CD4-positive, alpha-beta memory T cell (primary cell): ENCODE measurements at regions of chr2 and their contacts with region 1.

Region 1: DNA sequence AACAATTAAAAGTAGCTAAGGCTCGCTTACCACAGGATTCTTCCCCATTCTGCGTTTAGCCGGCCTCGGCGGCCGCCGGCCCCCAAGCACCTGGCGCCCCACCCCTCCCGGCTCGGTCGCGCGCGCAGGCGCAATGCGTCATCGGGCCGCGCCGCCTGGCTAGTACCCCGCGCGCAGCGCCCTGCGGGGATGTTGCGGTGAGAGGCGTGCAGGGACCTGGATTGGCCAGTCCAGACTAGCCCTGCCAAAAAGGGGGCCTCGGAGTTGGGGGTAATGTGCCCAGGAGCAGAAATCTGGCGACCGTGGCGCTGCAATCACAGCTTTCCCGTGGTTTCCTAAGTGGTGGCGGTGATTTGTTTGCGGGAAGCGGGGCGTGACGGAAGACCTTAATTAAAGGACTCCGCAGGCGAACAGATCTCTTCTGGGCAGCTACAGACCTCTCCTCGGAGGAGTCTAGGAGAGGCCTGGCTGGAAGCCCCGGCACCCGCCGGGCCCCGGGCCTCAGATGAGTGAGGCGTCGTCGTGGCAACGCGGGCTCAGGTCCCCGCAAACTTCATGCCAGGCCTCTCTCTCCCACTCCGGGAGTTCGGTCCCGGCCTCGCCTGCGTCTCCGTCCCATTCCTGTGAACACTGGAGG is 606 bp downstream of the TMEM237 start:
- DNase-seq: peak; percentile 83 to 91 (median 89)
- H3K4me3 ChIP-seq: peak overlapping the region; percentile 92 to 97
- H3K4me3 Mint-ChIP-seq: peak overlapping the region; percentile 89 to 99 (median 96)
- H3K27ac ChIP-seq: peak overlapping the region; percentile 83
- H3K27ac Mint-ChIP-seq: peak overlapping the region; percentile 95 to 100 (median 96)
- H3K4me1 ChIP-seq: no peaks in the 10 kb centered on the region
- H3K4me1 Mint-ChIP-seq: peaks cover 7 to 23% (median 7%) of the 10 kb centered on the region in 4 donors
- H3K27me3 ChIP-seq: no peaks in the 10 kb centered on the region
- H3K27me3 Mint-ChIP-seq: no peaks in the 10 kb centered on the region

Region 2: DNA sequence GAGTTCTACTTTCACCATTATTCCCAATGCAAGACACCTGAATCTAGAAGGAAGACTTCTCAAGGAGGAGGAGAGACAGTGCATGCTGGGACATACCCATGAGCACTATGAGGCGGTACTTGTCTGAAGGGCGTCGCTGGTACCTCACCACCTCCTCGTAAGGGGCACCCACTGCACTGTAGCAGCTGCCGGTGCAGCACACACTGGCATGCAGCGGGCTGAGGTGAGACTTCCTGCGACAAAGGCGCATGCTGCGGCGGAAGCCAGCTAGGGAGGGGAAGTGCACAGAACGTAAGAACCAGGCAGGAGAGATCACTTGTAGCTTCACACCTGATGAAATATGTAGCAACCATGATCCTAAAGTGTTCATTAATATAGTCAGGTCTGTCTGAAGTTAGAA is 13.4 kb after region 1 on chr2:
- CTCF ChIA-PET with region 1: no interaction called
- POLR2A ChIA-PET with region 1: interaction called, 15 read pairs
- intact Hi-C with region 1: no loop called
- DNase-seq: peak in 1 of 5 donors; percentile 7
- H3K4me3 ChIP-seq: no peak overlapping the region
- H3K4me3 Mint-ChIP-seq: no peak overlapping the region
- H3K27ac ChIP-seq: no peak overlapping the region
- H3K27ac Mint-ChIP-seq: no peak overlapping the region
- H3K4me1 ChIP-seq: no peaks in the 10 kb centered on the region
- H3K4me1 Mint-ChIP-seq: peaks cover 0 to 2% (median 0%) of the 10 kb centered on the region in 4 donors
- H3K27me3 ChIP-seq: no peaks in the 10 kb centered on the region
- H3K27me3 Mint-ChIP-seq: peaks cover 14 to 15% of the 10 kb centered on the region in 2 donors

Region 3: GRCh38 chr2:202375609-202376408 is 733.1 kb after region 1 on chr2 and contains the start of gene BMPR2:
- CTCF ChIA-PET with region 1: no interaction called
- POLR2A ChIA-PET with region 1: no interaction called
- intact Hi-C with region 1: loop called (anchors 5 kb)
- DNase-seq: peak; percentile 73 to 88 (median 81)
- H3K4me3 ChIP-seq: peak within 1 kb of the TSS; percentile 91 to 98
- H3K4me3 Mint-ChIP-seq: peak within 1 kb of the TSS; percentile 96 to 99 (median 99)
- H3K27ac ChIP-seq: peak within 1 kb of the TSS; percentile 76
- H3K27ac Mint-ChIP-seq: peak within 1 kb of the TSS; percentile 91 to 98 (median 95)
- H3K4me1 ChIP-seq: peaks cover 30% of the 10 kb centered on the region
- H3K4me1 Mint-ChIP-seq: peaks cover 21 to 43% (median 23%) of the 10 kb centered on the region in 4 donors
- H3K27me3 ChIP-seq: no peaks in the 10 kb centered on the region
- H3K27me3 Mint-ChIP-seq: no peaks in the 10 kb centered on the region
- total RNA-seq, gene BMPR2: 18.8 to 20.8 TPM